ENCODE measurements at regions of chr11 and their contacts with region 1.

Region 1: DNA sequence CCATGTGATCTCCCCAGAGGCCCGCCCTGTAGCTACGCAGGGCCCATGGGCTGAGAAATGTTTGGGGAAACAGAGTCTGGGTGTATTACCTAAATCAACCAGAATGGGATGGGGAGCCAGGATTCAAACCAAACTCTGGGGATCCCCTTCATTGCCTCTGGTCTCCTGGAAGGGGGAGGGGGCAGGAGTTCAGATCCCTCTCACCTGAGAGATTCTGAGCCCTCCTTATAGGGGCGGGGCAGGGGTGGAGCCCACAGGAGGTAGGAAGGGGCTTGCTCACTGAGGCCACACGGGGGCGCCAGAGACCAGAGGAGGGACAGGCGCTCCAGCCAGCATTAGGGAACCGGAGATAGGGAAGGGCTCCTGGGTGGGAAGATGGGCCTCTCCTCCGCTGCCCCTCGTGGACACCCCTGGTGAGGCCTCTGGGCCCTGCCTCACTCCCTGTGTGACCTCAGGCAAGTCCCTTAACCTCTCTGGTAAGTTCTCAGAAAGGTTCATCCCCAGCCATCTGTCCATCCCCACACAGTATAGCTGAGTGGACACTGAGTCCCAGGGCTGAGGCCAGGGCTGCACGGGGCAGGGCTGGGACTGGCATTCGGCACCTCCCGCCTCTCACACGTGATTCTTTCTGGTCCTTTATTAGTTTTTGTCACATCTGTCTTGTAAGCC is 2.7 kb upstream of the CDC42BPG start:
- DNase-seq: peak; percentile 83 to 95
- H3K4me3 ChIP-seq: no peak overlapping the region
- H3K27ac ChIP-seq: no peak overlapping the region
- H3K4me1 ChIP-seq: peaks cover 70% of the 10 kb centered on the region
- H3K27me3 ChIP-seq: no peaks in the 10 kb centered on the region
- CTCF ChIP-seq: peak; percentile 98

Region 2: DNA sequence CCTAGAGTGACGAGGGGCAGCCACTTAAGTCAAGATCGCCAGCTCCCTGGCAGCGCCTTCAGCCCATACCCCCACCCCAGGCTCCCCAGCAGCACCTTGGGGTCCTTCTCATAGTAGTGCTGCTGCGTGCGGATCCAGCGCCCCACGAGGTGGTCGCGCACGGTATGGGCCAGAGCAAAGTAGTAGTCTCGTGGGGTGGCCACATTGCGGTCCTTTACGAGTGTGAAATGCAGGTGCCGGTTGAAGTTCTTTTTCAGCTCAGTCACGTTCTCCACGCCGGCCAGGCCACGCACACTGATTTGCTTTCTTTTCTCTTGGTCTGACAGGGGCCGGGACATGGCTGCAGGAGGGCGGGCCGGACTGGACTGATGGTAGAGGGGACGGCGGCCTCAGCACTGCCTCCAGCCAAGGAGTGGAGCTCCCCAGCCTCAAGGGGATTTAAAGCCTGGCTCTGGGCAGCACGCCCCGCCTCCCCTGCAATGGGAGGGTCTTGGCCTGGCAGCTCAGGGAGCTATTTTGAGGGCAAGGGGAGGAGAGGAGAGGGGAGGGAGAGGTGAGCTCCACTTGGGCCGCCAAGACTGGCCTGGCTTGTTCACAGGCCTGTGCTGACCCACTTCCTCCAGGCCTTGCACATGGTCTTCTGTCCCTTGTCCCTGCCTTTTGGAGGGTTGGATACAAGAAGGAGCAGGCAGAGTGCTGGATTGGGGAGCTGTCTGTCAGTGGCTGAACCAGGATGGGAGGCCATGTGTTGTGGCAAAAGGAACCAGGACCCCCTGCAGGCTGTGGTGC is 87.4 kb before region 1 on chr11 and contains the start of gene PYGM:
- CTCF ChIA-PET with region 1: no interaction called
- POLR2A ChIA-PET with region 1: no interaction called
- intact Hi-C with region 1: no loop called
- DNase-seq: no peak
- H3K4me3 ChIP-seq: no peak within 1 kb of the TSS
- H3K27ac ChIP-seq: no peak within 1 kb of the TSS
- H3K4me1 ChIP-seq: no peaks in the 10 kb centered on the region
- H3K27me3 ChIP-seq: no peaks in the 10 kb centered on the region
- CTCF ChIP-seq: no peak
- total RNA-seq, gene PYGM: 1.3 and 1.6 TPM in 2 replicates

Region 3: DNA sequence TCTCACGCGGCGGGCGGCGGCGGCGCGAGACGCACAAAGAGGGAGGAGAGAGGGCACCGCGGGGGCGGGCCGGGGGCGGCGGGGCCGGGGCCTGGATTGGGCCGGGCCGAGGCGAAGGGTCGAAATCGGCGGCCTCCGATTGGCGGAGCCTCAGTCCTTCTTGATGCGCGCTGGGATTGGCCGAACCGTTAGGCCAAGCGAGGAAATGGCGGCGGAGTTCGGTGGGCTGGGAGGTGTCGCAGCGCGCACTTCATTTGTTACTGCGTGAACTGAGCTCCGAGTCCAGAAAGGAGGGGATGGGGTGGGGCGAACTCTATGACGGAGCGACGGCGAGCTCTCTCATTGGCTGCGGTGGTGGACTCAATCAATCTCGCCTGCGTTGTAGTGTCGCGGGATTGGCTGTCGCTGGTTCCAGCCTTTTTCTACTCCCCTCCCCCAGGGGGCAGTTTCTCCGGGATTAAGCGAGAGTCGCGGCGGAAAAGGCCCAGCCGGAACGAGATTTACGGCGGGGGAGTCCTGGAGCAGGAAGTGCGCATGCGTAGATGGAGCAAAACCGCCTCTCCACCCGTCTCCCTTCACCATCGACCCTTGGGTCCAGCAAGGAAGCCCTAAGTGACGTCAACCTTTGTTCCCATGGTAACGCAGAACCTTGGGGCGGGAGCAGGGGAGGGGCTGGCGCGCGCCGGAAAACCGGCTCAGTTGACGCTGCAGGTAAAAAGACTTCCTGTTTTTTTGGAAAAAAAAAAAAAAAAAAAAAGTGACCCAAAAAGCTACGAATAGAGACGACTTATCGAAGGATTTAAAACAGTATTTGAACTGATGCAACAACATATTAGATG is 68.4 kb before region 1 on chr11 and contains the start of gene SF1:
- CTCF ChIA-PET with region 1: interaction called, 3 read pairs
- POLR2A ChIA-PET with region 1: interaction called, 6 read pairs
- intact Hi-C with region 1: loop called (anchors 1 kb)
- DNase-seq: peak; percentile 100
- H3K4me3 ChIP-seq: peak within 1 kb of the TSS; percentile 98
- H3K27ac ChIP-seq: peak within 1 kb of the TSS; percentile 86
- H3K4me1 ChIP-seq: peaks cover 26% of the 10 kb centered on the region
- H3K27me3 ChIP-seq: no peaks in the 10 kb centered on the region
- CTCF ChIP-seq: 0 out of 2 replicates have a peak, but pooled peaks have one; percentile 2
- total RNA-seq, gene SF1: 253 and 336 TPM in 2 replicates

Region 4: DNA sequence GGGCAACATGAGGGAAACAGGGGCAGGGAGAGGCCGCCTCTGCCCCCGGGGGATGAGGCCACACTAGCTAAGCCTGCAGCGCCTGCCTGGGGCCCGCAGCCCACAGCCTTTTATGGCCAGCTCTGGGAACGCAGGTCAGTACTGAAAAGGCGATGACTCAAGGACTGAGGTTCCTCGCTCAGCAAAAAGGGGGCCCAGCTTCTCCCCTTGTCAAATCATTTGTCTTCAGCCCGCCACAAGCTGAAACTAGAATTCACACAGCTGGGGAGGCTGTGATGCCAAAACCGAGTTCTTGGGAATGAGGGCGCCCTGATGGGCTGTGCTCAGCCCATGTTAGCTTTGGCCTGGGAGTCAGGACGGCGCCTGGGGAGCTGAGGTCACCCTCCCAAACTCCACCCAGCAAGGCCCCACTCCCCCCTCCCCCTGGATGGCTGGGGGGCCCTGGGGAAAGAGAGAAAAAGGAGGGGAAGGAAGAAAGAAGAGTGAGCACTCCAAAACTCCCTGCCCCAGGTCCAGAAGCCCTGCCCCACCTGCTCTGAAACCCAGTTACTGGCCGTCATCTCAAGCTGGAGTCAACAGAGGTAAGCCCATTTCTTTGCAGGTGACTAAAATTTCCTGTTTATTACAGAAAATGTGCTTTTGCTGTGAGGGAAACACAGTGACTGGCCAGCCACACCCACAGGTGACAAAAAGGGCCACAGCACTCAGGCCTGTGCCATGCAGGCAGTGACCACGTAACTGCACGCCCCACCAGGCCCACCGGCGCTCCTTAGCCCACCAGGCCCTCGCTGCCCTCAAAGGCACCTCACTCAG is 17.5 kb after region 1 on chr11:
- CTCF ChIA-PET with region 1: interaction called, 12 read pairs
- POLR2A ChIA-PET with region 1: interaction called, 6 read pairs
- intact Hi-C with region 1: no loop called
- DNase-seq: peak in 1 of 2 experiments; percentile 79
- H3K4me3 ChIP-seq: no peak overlapping the region
- H3K27ac ChIP-seq: no peak overlapping the region
- H3K4me1 ChIP-seq: peaks cover 41% of the 10 kb centered on the region
- H3K27me3 ChIP-seq: no peaks in the 10 kb centered on the region
- CTCF ChIP-seq: no peak

Region 5: DNA sequence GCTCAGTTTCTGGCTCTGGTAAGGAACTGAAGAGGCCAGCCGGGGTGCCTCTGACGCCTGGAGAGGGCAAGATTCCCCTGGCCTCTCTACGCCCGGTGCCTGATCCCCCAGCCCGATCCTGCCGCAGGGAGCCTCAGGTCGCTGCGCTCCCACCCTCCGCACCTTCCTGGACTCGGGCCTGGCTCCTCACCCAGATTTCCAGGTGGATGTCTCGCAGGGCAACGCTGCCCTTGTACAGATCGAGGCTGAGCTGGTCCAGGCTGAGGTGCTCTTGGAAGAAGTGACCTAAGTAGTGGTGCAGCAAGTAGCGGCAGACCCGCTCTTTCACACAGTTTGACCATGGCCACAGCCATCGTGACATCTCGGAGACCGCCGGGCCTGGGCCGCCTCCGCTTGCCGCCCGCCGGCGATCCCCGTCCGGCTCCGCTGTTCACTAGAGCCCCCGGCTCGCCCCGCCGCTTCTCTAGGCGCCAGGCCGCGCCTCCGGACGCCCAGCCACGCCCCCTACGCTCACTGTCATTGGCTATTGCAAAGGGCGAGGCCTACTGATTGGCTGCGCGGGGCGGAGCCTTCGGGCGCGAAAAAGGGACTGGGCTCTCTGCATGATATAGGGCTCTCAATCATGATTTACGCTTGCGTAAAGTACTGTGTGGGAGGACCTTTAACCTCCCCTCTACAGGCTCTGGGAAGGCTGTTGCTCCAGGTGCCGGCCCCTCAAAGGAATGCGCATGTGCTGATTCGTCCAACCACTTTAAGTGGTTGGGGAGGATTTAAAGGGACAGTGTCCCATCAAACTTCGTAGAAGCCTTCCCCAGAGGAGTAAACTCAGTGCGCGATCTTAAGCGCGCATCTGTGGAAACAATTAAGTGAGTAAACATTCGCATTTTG is 69.9 kb after region 1 on chr11 and contains the start of gene ATG2A:
- CTCF ChIA-PET with region 1: no interaction called
- POLR2A ChIA-PET with region 1: interaction called, 4 read pairs
- intact Hi-C with region 1: loop called (anchors 2 kb)
- DNase-seq: peak; percentile 99
- H3K4me3 ChIP-seq: peak within 1 kb of the TSS; percentile 67
- H3K27ac ChIP-seq: peak within 1 kb of the TSS; percentile 50
- H3K4me1 ChIP-seq: peaks cover 16% of the 10 kb centered on the region
- H3K27me3 ChIP-seq: no peaks in the 10 kb centered on the region
- CTCF ChIP-seq: no peak
- total RNA-seq, gene ATG2A: 48.2 and 53.2 TPM in 2 replicates

Region 6: GRCh38 chr11:65111744-65112414 is 264.7 kb after region 1 on chr11 and contains the start of gene TM7SF2:
- CTCF ChIA-PET with region 1: interaction called, 3 read pairs
- POLR2A ChIA-PET with region 1: interaction called, 21 read pairs
- intact Hi-C with region 1: loop called (anchors 2 kb)
- DNase-seq: peak; percentile 92 to 97
- H3K4me3 ChIP-seq: peak within 1 kb of the TSS; percentile 78
- H3K27ac ChIP-seq: no peak within 1 kb of the TSS
- H3K4me1 ChIP-seq: peaks cover 40% of the 10 kb centered on the region
- H3K27me3 ChIP-seq: no peaks in the 10 kb centered on the region
- CTCF ChIP-seq: no peak
- total RNA-seq, gene TM7SF2: 49.5 and 72.3 TPM in 2 replicates

Region 7: DNA sequence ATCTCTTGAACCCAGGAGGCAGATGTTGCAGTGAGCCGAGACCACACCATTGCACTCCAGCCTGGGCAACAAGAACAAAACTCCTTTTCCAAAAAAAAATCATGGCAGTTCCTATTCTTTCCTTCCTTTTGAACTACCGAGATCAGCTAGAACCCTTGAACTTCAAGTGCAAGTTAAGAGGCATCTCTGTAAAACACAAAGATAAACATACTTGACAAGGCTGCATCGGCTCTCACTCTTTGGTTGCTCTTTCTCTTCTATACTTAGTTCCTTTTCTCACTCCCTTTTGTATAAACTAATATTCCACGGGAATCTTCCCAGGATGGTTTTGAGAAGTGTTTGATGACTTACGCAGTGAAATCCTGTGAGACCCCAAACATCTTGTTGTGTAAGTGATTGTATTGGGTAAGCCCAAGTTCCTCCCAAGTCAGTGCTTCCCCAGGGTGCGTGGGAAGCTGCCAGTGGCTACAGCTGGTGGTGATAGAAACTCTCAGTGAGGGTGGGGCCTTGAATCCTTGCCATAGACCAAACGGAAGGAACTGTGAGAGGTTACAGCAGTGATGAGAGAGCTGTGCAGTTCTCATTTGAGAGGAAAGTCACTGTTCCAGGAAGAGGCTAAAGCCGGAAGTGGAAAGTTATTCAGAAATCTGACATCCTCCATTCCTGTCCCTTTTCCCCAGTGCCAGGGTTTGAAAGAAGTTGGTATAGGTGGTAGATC is 443.5 kb after region 1 on chr11:
- CTCF ChIA-PET with region 1: interaction called, 12 read pairs
- POLR2A ChIA-PET with region 1: no interaction called
- intact Hi-C with region 1: no loop called
- DNase-seq: peak; percentile 32 to 52
- H3K4me3 ChIP-seq: no peak overlapping the region
- H3K27ac ChIP-seq: peak overlapping the region; percentile 92
- H3K4me1 ChIP-seq: peaks cover 34% of the 10 kb centered on the region
- H3K27me3 ChIP-seq: no peaks in the 10 kb centered on the region
- CTCF ChIP-seq: no peak